ENCODE measurements at regions of chr2 and their contacts with region 1.

Region 1: GRCh38 chr2:70948337-70949003 is 12.8 kb downstream of the ATP6V1B1 start:
- DNase-seq: peak; percentile 81 to 87
- ATAC-seq: peak; percentile 93 to 99 (median 94)
- H3K4me3 ChIP-seq: peak overlapping the region; percentile 47
- H3K27ac ChIP-seq: no peak overlapping the region
- H3K4me1 ChIP-seq: peaks cover 3% of the 10 kb centered on the region
- H3K27me3 ChIP-seq: no peaks in the 10 kb centered on the region
- CTCF ChIP-seq: peak; percentile 87

Region 2: DNA sequence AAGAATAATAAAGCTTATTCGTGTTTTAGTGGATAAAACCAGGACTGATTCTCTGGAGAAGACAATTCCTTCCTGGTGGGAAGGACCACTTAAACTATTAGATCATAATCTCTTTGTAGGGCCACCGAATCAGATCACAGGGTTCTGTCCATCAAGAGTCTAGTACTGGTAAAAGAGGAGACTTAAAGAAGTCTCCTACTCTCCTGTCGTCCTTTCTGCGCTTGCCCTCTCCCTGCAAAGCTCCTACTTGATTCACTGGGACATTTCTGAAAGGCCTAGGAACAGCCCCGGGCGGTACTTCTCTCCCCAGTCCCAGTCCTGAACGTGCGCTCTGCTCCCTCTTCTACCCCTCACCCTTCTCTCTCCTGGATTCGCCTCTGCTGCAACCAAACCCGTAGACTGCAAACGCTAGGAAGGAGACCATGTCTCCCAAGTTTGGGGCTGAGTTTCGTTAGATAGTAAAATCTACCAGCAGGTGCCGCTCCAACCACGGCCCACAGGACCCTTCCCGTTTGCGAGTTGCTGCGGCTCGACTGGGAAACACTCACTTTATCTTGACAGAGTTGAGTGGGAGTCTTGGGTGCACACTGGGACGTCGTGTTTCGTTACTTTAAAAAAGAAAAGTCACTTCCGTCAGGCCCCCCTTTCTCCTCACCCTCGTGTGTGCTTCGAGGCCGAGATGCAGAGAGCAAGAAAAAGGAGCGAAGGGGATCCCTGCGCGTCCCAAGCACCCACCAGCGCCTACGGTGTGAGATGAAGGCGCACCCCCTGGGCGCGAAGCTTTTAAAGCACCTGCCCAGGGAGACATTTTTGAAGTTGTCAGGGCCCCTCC is 158.9 kb before region 1 on chr2:
- intact Hi-C with region 1: loop called in 1 of 2 experiments (anchors 5 kb)
- DNase-seq: peak; percentile 31 to 64
- ATAC-seq: peak; percentile 59 to 84 (median 66)
- H3K4me3 ChIP-seq: peak overlapping the region; percentile 53
- H3K27ac ChIP-seq: no peak overlapping the region
- H3K4me1 ChIP-seq: peaks cover 3% of the 10 kb centered on the region
- H3K27me3 ChIP-seq: peaks cover 2 to 64% (median 9%) of the 10 kb centered on the region in 3 donors
- CTCF ChIP-seq: peak; percentile 60

Region 3: GRCh38 chr2:70861777-70862625 is 86.5 kb before region 1 on chr2:
- intact Hi-C with region 1: loop called (anchors 2 kb)
- DNase-seq: peak; percentile 76 to 87
- ATAC-seq: peak; percentile 94 to 98 (median 94)
- H3K4me3 ChIP-seq: peak overlapping the region; percentile 41
- H3K27ac ChIP-seq: peak overlapping the region; percentile 50
- H3K4me1 ChIP-seq: peaks cover 3% of the 10 kb centered on the region
- H3K27me3 ChIP-seq: peaks cover 0 to 12% (median 5%) of the 10 kb centered on the region in 3 donors
- CTCF ChIP-seq: peak; percentile 96

Region 4: DNA sequence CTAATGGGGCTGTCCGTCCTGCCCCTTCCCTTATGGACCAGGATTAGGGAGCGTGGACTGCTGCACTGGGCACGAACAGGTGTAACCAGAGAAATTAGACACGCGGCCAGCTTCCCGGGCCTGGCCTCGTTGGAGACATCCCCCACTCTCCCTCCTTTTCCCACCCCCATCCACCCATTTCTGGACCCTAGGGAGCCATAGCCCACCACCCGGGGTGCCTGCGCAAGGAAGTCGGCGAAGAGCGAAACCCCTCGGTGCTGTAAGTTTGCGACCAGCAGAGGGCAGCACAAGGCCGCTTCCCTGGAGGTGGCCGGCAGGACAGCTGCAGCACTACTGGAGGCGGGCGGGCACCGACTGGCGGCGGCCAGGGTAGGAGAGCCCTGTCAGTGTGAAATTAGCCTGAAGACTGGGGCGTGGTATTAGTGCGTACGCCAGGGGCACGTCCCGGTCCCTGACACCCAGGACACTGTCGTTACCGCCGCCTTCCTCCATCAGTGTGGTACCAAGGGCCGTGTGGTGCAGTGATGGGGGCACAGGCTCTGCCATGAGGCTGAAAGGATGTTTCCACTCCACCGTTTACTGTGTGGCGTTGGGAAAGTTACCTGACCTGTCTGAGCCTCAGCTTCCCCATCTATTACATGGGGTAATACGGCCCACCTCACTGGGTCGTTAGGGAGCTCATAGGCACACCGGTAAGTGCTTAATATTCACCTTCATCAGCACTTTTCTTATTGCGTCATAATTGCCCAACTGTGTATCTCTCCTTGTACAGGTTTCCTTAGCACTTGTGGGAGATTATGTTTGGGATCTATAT is 76.9 kb before region 1 on chr2:
- intact Hi-C with region 1: loop called in 1 of 2 experiments (anchors 2 kb)
- DNase-seq: peak; percentile 84 to 94
- ATAC-seq: peak; percentile 97 to 100 (median 99)
- H3K4me3 ChIP-seq: peak overlapping the region; percentile 54
- H3K27ac ChIP-seq: no peak overlapping the region
- H3K4me1 ChIP-seq: peaks cover 7% of the 10 kb centered on the region
- H3K27me3 ChIP-seq: peaks cover 0 to 28% (median 7%) of the 10 kb centered on the region in 3 donors
- CTCF ChIP-seq: peak; percentile 89

Region 5: GRCh38 chr2:70977605-70978205 is 29.2 kb after region 1 on chr2:
- intact Hi-C with region 1: no loop called
- DNase-seq: no peak
- ATAC-seq: peak in 3 of 4 donors; percentile 65
- H3K4me3 ChIP-seq: peak overlapping the region; percentile 67
- H3K27ac ChIP-seq: no peak overlapping the region
- H3K4me1 ChIP-seq: peaks cover 13% of the 10 kb centered on the region
- H3K27me3 ChIP-seq: no peaks in the 10 kb centered on the region
- CTCF ChIP-seq: no peak